CD4-positive, alpha-beta memory T cell (primary cell): ENCODE measurements at regions of chr5 and their contacts with region 1.

Region 1: DNA sequence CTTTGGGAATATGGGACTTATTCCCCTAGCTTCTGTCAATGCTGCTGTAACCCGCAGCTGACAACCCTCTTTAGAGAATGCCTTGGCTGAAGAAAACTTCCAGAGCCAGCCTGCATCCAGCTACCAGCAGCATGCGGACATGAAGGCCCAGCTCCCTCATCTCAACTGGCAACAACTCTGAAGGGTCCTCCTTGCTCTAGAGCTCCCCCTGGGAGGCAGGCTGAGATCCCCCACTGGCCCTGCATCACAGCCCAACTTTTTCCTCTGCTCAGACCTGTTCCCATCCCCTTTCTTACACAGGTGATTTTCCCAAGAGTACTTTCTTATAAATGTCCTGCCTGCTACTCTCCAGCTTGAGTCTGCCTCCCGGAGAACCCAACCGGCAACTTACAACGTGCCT is 18.7 kb upstream of the WNT8A start:
- DNase-seq: no peak
- H3K4me3 ChIP-seq: no peak overlapping the region
- H3K4me3 Mint-ChIP-seq: no peak overlapping the region
- H3K27ac ChIP-seq: no peak overlapping the region
- H3K27ac Mint-ChIP-seq: peak overlapping the region in 2 of 7 donors; percentile 7 to 29
- H3K4me1 ChIP-seq: no peaks in the 10 kb centered on the region
- H3K4me1 Mint-ChIP-seq: peaks cover 3 to 6% (median 5%) of the 10 kb centered on the region in 4 donors
- H3K27me3 ChIP-seq: no peaks in the 10 kb centered on the region
- H3K27me3 Mint-ChIP-seq: peaks cover 0 to 2% of the 10 kb centered on the region in 2 donors

Region 2: GRCh38 chr5:137032929-137033328 is 1032.2 kb before region 1 on chr5:
- CTCF ChIA-PET with region 1: no interaction called
- POLR2A ChIA-PET with region 1: no interaction called
- intact Hi-C with region 1: no loop called
- DNase-seq: no peak
- H3K4me3 ChIP-seq: no peak overlapping the region
- H3K4me3 Mint-ChIP-seq: no peak overlapping the region
- H3K27ac ChIP-seq: no peak overlapping the region
- H3K27ac Mint-ChIP-seq: no peak overlapping the region
- H3K4me1 ChIP-seq: no peaks in the 10 kb centered on the region
- H3K4me1 Mint-ChIP-seq: no peaks in the 10 kb centered on the region
- H3K27me3 ChIP-seq: no peaks in the 10 kb centered on the region
- H3K27me3 Mint-ChIP-seq: no peaks in the 10 kb centered on the region

Region 3: GRCh38 chr5:137778772-137779564 is 286.1 kb before region 1 on chr5:
- CTCF ChIA-PET with region 1: interaction called, 19 read pairs
- POLR2A ChIA-PET with region 1: no interaction called
- intact Hi-C with region 1: loop called (anchors 1 kb)
- DNase-seq: peak in 4 of 5 donors; percentile 8 to 23 (median 18)
- H3K4me3 ChIP-seq: no peak overlapping the region
- H3K4me3 Mint-ChIP-seq: no peak overlapping the region
- H3K27ac ChIP-seq: no peak overlapping the region
- H3K27ac Mint-ChIP-seq: no peak overlapping the region
- H3K4me1 ChIP-seq: no peaks in the 10 kb centered on the region
- H3K4me1 Mint-ChIP-seq: no peaks in the 10 kb centered on the region
- H3K27me3 ChIP-seq: no peaks in the 10 kb centered on the region
- H3K27me3 Mint-ChIP-seq: peaks cover 4 to 5% of the 10 kb centered on the region in 2 donors

Region 4: DNA sequence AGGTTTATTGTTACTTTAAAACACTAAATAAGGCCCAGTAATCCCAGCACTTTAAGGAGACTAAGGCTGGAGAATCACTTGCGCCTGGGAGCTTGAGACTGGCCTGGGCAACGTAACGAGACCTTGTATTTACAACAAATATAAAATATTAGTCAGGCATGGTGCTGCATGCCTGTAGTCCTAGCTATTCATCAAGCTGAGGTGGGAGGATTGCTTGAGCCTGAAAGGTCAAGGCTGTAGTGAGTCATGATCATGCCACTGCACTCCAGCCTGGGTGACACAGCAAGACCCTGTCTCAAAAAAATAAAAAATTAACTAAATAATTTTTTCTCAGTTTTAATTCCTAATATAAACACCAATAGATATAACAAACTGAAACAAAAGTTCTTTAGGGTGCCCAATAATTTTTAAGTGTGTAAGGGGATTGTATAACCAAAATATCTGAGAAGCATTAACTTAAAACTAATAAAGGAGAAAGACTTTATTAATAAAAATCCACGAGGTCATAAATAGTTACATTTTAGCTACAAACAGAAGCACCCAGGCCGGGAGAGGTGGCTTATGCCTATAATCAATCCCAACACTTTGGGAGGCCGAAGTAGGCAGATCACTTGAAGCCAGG is 64.9 kb before region 1 on chr5:
- CTCF ChIA-PET with region 1: no interaction called
- POLR2A ChIA-PET with region 1: no interaction called
- intact Hi-C with region 1: no loop called
- DNase-seq: no peak
- H3K4me3 ChIP-seq: no peak overlapping the region
- H3K4me3 Mint-ChIP-seq: no peak overlapping the region
- H3K27ac ChIP-seq: no peak overlapping the region
- H3K27ac Mint-ChIP-seq: no peak overlapping the region
- H3K4me1 ChIP-seq: peaks cover under 1% of the 10 kb centered on the region
- H3K4me1 Mint-ChIP-seq: peaks cover 29 to 40% (median 37%) of the 10 kb centered on the region in 4 donors
- H3K27me3 ChIP-seq: no peaks in the 10 kb centered on the region
- H3K27me3 Mint-ChIP-seq: no peaks in the 10 kb centered on the region

Region 5: GRCh38 chr5:138054847-138055558 is 10.1 kb before region 1 on chr5:
- CTCF ChIA-PET with region 1: interaction called, 13 read pairs
- POLR2A ChIA-PET with region 1: no interaction called
- intact Hi-C with region 1: no loop called
- DNase-seq: no peak
- H3K4me3 ChIP-seq: no peak overlapping the region
- H3K4me3 Mint-ChIP-seq: no peak overlapping the region
- H3K27ac ChIP-seq: no peak overlapping the region
- H3K27ac Mint-ChIP-seq: no peak overlapping the region
- H3K4me1 ChIP-seq: no peaks in the 10 kb centered on the region
- H3K4me1 Mint-ChIP-seq: peaks cover 2 to 11% (median 7%) of the 10 kb centered on the region in 4 donors
- H3K27me3 ChIP-seq: no peaks in the 10 kb centered on the region
- H3K27me3 Mint-ChIP-seq: peaks cover 0 to 1% of the 10 kb centered on the region in 2 donors

Region 6: DNA sequence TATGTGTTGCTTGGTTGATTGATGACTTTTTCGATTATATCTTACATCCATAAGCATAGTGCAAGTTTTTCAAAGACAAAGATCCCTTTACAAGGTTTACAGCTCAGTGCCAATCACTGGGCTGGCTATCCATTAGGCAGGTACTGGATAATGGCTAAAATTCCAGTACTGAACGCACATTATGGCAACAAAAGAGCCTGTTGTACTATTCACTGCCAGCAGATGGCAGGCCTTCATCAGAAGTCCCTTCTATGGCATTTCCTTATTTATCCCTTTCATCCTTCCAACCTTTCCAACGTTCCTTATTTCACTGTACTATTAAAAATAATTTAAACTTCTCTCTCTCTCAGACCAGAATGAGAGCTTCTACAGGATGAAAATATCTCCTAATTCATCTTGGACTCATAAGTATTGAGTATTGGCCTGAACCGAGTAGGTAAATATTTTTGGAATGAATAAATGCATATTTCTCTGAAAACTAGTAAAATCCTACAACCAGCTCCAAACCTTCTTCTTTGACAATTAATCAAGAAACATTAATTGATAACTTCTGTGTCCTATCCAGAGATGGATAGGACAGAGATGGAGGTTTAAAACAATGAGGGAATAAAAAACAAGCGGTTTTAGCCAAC is 12.1 kb after region 1 on chr5:
- CTCF ChIA-PET with region 1: interaction called, 20 read pairs
- POLR2A ChIA-PET with region 1: no interaction called
- intact Hi-C with region 1: no loop called
- DNase-seq: peak in 4 of 5 donors; percentile 28 to 46 (median 38)
- H3K4me3 ChIP-seq: no peak overlapping the region
- H3K4me3 Mint-ChIP-seq: no peak overlapping the region
- H3K27ac ChIP-seq: no peak overlapping the region
- H3K27ac Mint-ChIP-seq: no peak overlapping the region
- H3K4me1 ChIP-seq: no peaks in the 10 kb centered on the region
- H3K4me1 Mint-ChIP-seq: peaks cover 4 to 10% (median 8%) of the 10 kb centered on the region in 4 donors
- H3K27me3 ChIP-seq: no peaks in the 10 kb centered on the region
- H3K27me3 Mint-ChIP-seq: no peaks in the 10 kb centered on the region